ENCODE measurements at regions of chr1 and their contacts with region 1.

Region 1: DNA sequence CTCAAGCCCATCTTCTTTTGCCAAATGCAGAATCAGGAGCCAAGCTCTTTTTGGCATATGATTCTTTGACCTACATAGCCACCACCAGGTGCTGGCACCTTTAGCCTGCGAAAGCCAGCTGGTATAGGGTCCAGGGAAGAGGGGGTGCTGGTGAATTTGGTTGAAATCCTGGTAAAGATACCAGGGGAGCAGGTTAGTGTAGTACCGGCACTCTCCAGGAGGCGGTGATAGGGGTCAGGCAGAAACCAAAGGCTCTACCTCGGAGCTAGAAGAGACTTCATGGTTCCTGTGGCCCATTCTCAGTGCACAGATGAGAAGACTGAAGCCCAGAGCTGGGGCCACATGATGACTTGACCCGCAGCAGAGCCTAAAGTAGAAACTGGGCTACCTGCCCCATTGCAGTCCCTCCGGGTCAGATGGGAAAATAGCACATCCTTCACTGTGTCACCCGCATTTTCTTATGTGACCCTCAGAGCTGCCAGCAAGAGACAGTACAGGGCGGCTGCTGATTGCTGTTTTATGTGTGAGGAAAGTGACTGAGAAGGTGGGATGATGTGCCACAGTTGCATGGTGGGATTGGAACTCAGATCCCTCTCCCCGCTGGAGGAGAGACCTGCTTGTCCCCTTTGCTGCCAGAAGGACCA is 36.0 kb upstream of the IL19 start:
- DNase-seq: peak; percentile 83
- H3K4me3 ChIP-seq: no peak overlapping the region; a peak in 1 of 4 replicates
- H3K27ac ChIP-seq: no peak overlapping the region
- H3K4me1 ChIP-seq: peaks cover 0 to 2% of the 10 kb centered on the region in 2 experiments; a peak in 1 of 4 replicates
- H3K27me3 ChIP-seq: no peaks in the 10 kb centered on the region
- CTCF ChIP-seq: peak; percentile 72
- EP300 ChIP-seq: no peak
- RAD21 ChIP-seq: peak; percentile 85

Region 2: GRCh38 chr1:206761159-206761768 is 26.6 kb after region 1 on chr1:
- CTCF ChIA-PET with region 1: interaction called, 10 read pairs
- POLR2A ChIA-PET with region 1: no interaction called
- DNase-seq: peak; percentile 59
- H3K4me3 ChIP-seq: no peak overlapping the region
- H3K27ac ChIP-seq: no peak overlapping the region
- H3K4me1 ChIP-seq: peaks cover 0 to 7% of the 10 kb centered on the region in 2 experiments; a peak in 2 of 4 replicates
- H3K27me3 ChIP-seq: no peaks in the 10 kb centered on the region; the same call in 1 of the 2 replicates
- CTCF ChIP-seq: peak; percentile 32; the same call in 1 of the 2 replicates
- EP300 ChIP-seq: peak in 1 of 2 experiments; percentile 54; a peak in 2 of 4 replicates
- RAD21 ChIP-seq: peak; percentile 36; the same call in 1 of the 2 replicates

Region 3: GRCh38 chr1:206808615-206809014 is 74.0 kb after region 1 on chr1:
- CTCF ChIA-PET with region 1: interaction called, 10 read pairs
- POLR2A ChIA-PET with region 1: no interaction called
- DNase-seq: no peak
- H3K4me3 ChIP-seq: no peak overlapping the region
- H3K27ac ChIP-seq: no peak overlapping the region
- H3K4me1 ChIP-seq: peaks cover 0 to 22% of the 10 kb centered on the region in 2 experiments; a peak in 2 of 4 replicates
- H3K27me3 ChIP-seq: peaks cover 9% of the 10 kb centered on the region; the same call in 1 of the 2 replicates
- CTCF ChIP-seq: peak; percentile 33; the same call in 1 of the 2 replicates
- EP300 ChIP-seq: no peak
- RAD21 ChIP-seq: peak; percentile 56

Region 4: GRCh38 chr1:206925106-206925736 is 190.6 kb after region 1 on chr1:
- CTCF ChIA-PET with region 1: interaction called, 13 read pairs
- POLR2A ChIA-PET with region 1: no interaction called
- DNase-seq: no peak
- H3K4me3 ChIP-seq: no peak overlapping the region
- H3K27ac ChIP-seq: no peak overlapping the region
- H3K4me1 ChIP-seq: no peaks in the 10 kb centered on the region
- H3K27me3 ChIP-seq: no peaks in the 10 kb centered on the region
- CTCF ChIP-seq: no peak
- EP300 ChIP-seq: no peak
- RAD21 ChIP-seq: no peak

Measured in SK-N-SH (cell line).